ENCODE measurements at regions of chr5 and their contacts with region 1.

Region 1: DNA sequence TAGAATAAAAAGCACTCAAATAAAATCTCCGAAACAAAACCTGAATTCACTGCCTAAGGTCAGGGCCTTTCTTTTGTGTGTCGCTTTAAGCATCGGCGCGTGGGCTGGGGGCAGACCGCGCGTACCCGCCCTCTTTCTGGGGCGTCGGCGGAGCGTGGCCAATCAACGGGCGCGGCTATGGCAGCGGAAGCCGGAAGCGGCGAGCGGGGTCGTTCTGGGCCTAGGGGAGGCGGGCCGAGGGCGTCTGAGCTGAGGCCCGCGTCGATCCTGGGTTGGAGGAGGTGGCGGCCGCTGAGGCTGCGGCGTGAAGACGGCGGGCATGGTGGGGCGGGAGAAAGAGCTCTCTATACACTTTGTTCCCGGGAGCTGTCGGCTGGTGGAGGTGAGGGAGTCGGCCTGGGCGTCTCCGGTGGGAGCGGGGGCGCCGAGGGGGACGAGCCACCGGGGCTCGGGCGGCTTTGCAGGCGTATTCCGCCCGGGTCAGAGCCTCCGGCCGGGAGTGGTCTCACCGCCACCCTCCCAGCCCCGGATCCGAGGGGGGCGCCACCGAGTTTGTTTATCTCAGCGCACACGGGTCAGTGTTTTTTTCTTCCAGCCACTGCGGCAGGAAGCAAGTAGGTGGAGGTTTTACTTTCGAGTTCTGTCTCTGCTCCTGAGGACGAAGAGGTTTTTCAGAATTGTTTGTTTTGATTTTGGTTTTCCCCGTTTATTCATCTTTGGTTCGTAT is at the start of gene MAT2B:
- DNase-seq: peak; percentile 93 to 94
- ATAC-seq: peak; percentile 81
- H3K4me3 ChIP-seq: peak within 1 kb of the TSS; percentile 72 to 88 (median 80)
- H3K27ac ChIP-seq: peak within 1 kb of the TSS; percentile 92 to 98 (median 96)
- H3K4me1 ChIP-seq: peaks cover 55 to 56% of the 10 kb centered on the region in 2 donors
- H3K27me3 ChIP-seq: no peaks in the 10 kb centered on the region
- CTCF ChIP-seq: peak in 3 of 5 experiments; percentile 51 to 67 (median 63)
- POLR2A ChIP-seq: peak; percentile 89 to 96
- total RNA-seq, gene MAT2B: 26.6 to 44.7 (median 32.1) TPM

Region 2: GRCh38 chr5:163437309-163438182 is 68.0 kb before region 1 on chr5 and contains the start of gene CCNG1:
- in situ Hi-C with region 1: no loop called
- intact Hi-C with region 1: loop called (anchors 1 kb)
- DNase-seq: peak; percentile 92 to 94
- ATAC-seq: peak; percentile 91
- H3K4me3 ChIP-seq: peak within 1 kb of the TSS; percentile 79 to 100 (median 84)
- H3K27ac ChIP-seq: peak within 1 kb of the TSS; percentile 91 to 100 (median 92)
- H3K4me1 ChIP-seq: peaks cover 23 to 47% of the 10 kb centered on the region in 2 donors
- H3K27me3 ChIP-seq: no peaks in the 10 kb centered on the region
- CTCF ChIP-seq: peak in 3 of 5 experiments; percentile 21 to 39 (median 34)
- POLR2A ChIP-seq: peak; percentile 68 to 90
- total RNA-seq, gene CCNG1: 63.7 to 125 (median 109) TPM

Region 3: GRCh38 chr5:163473635-163474243 is 31.8 kb before region 1 on chr5:
- in situ Hi-C with region 1: no loop called
- intact Hi-C with region 1: loop called (anchors 1 kb)
- DNase-seq: no peak
- ATAC-seq: peak in 1 of 2 donors; percentile 53
- H3K4me3 ChIP-seq: no peak overlapping the region
- H3K27ac ChIP-seq: no peak overlapping the region
- H3K4me1 ChIP-seq: no peaks in the 10 kb centered on the region
- H3K27me3 ChIP-seq: no peaks in the 10 kb centered on the region
- CTCF ChIP-seq: peak in 3 of 5 experiments; percentile 15 to 35 (median 32)
- POLR2A ChIP-seq: no peak

Measured in gastrocnemius medialis (tissue), 4 donors.